ENCODE measurements at regions of chr13 and their contacts with region 1.

Region 1: DNA sequence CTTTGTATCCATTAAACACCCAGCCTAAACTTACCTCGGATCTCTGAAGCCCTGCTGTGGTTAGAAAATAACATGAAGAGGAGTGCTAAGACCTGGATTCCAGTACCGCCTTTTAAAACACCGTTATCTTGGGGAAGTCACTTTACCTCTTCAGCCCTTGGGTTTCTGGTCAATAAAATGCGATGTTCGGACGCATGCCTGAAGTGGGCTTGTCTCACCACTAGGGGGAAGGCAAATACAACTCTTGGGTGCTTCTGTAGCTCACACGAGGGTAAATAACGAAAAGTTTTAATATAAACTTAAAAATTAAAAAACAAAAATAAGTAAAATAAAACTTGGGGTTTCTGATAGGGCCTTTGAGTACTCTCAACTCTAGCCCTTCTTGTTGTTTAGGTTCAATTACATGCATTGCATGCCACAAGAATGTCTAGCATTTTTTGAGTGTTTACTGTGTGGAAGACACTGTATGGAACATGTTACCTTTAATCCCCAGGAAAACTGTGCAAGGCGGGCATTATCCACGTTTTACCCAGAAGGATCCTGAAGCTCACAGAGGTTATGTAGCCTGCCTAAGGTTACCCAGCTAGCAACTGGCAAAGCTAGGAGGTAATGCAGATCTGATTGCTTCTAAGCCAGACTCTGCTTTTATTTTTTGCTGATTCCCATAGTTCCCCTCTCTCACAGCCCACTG is 240.4 kb downstream of the LMO7 start:
- DNase-seq: peak; percentile 5
- H3K4me3 ChIP-seq: no peak overlapping the region
- H3K27ac ChIP-seq: no peak overlapping the region
- H3K4me1 ChIP-seq: no peaks in the 10 kb centered on the region
- H3K27me3 ChIP-seq: no peaks in the 10 kb centered on the region
- CTCF ChIP-seq: peak; percentile 74 to 83 (median 83)

Region 2: DNA sequence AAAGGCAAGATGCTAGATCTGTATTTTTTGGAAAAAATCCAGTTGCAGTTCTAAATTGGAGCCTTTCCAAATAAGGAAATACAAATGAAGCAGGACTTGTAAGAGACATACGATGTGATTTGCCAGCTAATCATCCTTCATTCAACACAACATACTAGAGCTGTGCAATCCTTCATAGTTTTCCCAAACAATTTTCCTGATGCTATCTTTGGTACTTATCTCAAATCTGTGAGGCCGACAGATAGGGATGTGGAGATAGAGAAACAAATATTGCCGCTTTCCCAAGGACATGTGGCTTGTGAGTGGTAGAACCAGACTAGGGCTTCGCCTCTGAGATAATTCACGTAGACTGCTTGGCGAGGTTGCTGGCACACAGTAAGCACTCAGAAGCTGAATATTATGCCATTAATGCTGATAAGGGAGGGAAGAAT is 63.7 kb before region 1 on chr13:
- dilution Hi-C with region 1: no loop called
- DNase-seq: no peak
- H3K4me3 ChIP-seq: no peak overlapping the region
- H3K27ac ChIP-seq: no peak overlapping the region
- H3K4me1 ChIP-seq: no peaks in the 10 kb centered on the region
- H3K27me3 ChIP-seq: no peaks in the 10 kb centered on the region
- CTCF ChIP-seq: no peak

Region 3: DNA sequence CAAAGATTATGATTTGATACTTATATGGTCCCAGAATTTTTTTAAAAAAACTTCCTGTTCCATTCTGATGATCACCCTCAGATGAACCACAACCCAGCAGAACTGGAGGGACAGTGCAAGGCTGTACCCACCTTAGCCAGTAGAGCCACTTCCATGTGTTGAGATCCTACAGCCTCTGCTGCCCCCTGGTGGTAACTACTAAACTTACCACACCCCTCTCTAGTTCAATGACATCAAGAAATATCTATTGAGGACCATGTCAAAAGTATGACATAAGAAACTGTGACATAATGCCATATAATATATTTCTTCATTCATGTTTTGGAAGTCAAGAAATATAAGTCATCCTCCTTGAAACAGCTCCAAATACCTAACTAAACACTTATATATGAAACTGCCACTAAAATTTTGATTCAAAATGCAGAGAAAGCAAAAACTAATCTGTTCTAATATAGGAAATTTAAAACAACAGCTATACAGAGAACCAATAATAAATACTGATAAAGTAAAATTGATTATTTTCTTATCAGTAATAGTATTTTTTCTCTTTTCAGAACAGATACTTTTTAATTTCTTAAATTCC is 597.1 kb after region 1 on chr13:
- dilution Hi-C with region 1: loop called (anchors 25 kb)
- DNase-seq: peak; percentile 30
- H3K4me3 ChIP-seq: no peak overlapping the region
- H3K27ac ChIP-seq: no peak overlapping the region
- H3K4me1 ChIP-seq: no peaks in the 10 kb centered on the region
- H3K27me3 ChIP-seq: peaks cover 3% of the 10 kb centered on the region
- CTCF ChIP-seq: peak; percentile 66 to 84 (median 78)